PC-9 (cell line): ENCODE measurements at regions of chr11 and their contacts with region 1.

Region 1: DNA sequence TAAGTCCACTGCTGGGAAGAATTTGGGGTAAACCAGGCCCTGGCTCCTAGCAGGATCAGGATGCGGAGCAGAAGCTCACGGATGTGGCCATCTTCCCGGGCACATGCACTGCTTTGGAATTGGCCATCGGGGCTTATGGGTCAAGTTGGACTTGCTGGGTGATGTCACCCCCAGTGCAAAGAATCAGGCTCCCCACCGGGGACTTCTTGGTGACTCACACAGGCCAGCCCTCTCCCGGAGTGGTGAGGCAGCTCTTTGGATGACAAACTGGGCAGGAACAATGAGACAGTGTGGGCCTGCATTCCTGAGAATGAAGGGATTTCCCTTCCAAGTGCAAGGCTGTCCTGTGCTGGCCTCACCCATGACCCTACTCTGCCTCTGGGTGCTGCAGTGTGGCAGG is 128.8 kb upstream of the ANO1 start:
- DNase-seq: peak; percentile 96 to 99
- H3K4me3 ChIP-seq: peak overlapping the region; percentile 5; the same call in 1 of the 2 replicates
- H3K27ac ChIP-seq: peak overlapping the region; percentile 96
- H3K4me1 ChIP-seq: peaks cover 45% of the 10 kb centered on the region
- H3K27me3 ChIP-seq: no peaks in the 10 kb centered on the region
- CTCF ChIP-seq: no peak

Region 2: DNA sequence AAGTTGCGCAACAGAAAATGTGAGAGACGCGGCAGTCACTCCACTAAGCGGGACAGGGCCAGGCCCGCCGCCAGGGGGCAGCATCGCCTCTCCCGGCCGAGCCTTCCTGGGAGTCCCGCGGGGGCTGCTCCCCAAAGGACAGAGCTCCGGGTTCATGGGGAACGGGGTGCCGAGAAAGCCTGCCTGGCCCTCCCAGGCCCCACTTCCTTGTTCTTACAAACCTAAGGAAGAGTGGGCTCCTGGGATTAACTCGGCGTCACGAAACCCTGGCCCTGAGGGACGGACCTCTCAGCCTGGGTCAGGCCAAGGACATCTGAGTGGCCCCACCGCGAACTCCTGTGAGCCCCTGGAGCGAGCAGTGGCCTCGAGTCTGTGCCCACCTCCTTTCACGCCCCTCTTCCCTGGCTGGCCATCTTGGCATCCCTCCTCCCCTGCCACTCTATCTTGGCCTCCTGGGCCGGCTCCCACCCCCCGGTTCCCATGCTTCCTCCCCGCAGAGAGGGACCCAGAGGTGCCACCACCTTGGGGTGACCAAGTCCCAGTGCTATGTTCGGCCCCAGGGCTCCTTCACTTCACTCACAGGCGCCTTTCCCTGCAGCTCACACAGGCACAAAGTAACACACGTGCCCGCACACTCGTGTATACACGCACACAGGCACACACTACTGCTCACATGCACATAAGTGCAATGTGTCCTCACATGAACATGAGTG is 30.2 kb before region 1 on chr11:
- CTCF ChIA-PET with region 1: interaction called, 3 read pairs
- POLR2A ChIA-PET with region 1: interaction called, 11 read pairs
- intact Hi-C with region 1: loop called (anchors 1 kb)
- DNase-seq: peak; percentile 56 to 80
- H3K4me3 ChIP-seq: peak overlapping the region; percentile 16; the same call in 1 of the 2 replicates
- H3K27ac ChIP-seq: no peak overlapping the region
- H3K4me1 ChIP-seq: peaks cover 56% of the 10 kb centered on the region
- H3K27me3 ChIP-seq: no peaks in the 10 kb centered on the region
- CTCF ChIP-seq: peak; percentile 98

Region 3: GRCh38 chr11:70082829-70083228 is 133.5 kb after region 1 on chr11:
- CTCF ChIA-PET with region 1: no interaction called
- POLR2A ChIA-PET with region 1: no interaction called
- intact Hi-C with region 1: loop called (anchors 1 kb)
- DNase-seq: no peak
- H3K4me3 ChIP-seq: no peak overlapping the region
- H3K27ac ChIP-seq: peak overlapping the region; percentile 31
- H3K4me1 ChIP-seq: peaks cover 56% of the 10 kb centered on the region
- H3K27me3 ChIP-seq: no peaks in the 10 kb centered on the region
- CTCF ChIP-seq: peak; percentile 44

Region 4: GRCh38 chr11:70141486-70142220 is 192.3 kb after region 1 on chr11:
- CTCF ChIA-PET with region 1: interaction called, 3 read pairs
- POLR2A ChIA-PET with region 1: no interaction called
- intact Hi-C with region 1: loop called (anchors 5 kb)
- DNase-seq: no peak
- H3K4me3 ChIP-seq: no peak overlapping the region
- H3K27ac ChIP-seq: peak overlapping the region; percentile 52
- H3K4me1 ChIP-seq: peaks cover 33% of the 10 kb centered on the region
- H3K27me3 ChIP-seq: no peaks in the 10 kb centered on the region
- CTCF ChIP-seq: no peak

Region 5: DNA sequence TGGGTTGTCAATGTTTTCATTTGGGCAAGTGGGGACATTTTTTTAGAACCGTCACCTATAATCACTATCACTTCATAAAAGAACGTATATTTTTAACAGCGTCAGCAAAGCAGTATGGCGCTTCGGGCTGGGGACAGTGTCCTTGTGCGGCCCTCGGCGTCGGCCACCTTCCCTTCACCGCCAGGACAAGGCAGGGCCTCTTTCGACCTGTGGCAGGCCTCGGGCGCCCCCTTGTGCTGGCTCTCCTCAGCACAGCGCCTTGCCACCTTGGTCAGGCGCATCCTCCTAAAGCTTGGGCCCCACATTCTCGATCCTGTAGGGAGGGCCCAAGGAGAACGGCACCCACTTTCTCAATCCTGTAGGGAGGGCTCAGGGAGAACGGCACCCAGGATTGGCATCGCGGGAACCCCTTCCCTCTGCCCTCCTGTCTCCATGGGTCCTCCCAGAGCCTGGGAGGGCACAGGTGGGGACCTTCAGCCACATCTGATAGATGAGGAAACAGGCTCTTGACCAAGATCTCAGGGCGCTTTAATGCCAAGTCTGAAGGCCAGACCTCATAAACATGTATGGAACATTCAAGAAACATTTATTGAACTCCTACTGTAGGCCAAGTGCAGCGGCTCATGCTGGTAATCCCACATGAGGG is 242.3 kb after region 1 on chr11:
- CTCF ChIA-PET with region 1: no interaction called
- POLR2A ChIA-PET with region 1: no interaction called
- intact Hi-C with region 1: loop called (anchors 1 kb)
- DNase-seq: peak; percentile 62 to 90
- H3K4me3 ChIP-seq: no peak overlapping the region
- H3K27ac ChIP-seq: no peak overlapping the region
- H3K4me1 ChIP-seq: peaks cover 13% of the 10 kb centered on the region; the same call in 1 of the 2 replicates
- H3K27me3 ChIP-seq: no peaks in the 10 kb centered on the region
- CTCF ChIP-seq: peak; percentile 93

Region 6: DNA sequence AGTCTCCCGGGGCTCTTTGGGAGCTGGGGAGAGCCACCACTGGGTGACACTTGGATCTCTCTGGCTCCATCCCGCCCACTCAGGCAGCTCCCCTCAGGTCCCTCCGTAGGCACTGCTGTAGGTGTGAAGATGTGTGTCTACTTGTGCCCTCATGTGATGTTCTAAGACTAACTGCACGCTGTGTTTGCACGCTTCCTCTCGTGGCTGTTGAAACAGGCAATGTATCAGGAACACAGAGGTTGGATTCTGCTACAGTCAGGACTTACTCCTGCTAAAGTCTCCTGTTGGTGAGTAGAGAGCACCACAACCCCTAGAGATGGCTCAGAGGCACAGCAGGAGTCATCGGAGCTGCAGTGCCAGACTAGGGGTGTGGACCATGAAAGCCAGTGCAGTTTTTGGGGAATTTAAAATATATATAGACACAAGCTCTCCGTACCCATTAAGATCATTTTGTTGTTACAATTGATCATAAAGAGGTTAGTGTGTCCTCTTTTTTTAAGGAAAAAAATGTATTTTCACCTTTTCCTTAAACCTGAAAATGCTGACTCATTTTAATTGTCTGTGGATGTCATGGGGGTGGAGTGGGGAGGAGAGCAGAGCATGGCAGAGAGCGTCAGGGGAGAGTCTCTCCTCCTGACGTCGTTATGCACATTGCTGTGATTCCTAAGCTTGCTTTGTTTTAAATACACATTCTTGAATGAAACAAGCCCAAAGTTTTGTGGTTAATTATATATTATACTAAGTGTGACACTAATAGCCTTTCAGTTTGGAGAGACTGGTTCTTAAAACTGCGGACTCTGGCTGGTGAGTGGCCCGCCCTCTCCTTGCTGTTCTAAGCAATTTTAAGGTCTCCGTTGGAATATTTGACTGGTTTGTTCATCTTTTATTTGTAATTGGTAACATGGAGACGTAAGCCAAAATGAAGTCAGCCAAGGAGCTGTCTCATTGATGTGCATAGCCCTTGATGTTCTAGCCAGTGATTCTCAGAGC is 432.8 kb after region 1 on chr11:
- CTCF ChIA-PET with region 1: no interaction called
- POLR2A ChIA-PET with region 1: no interaction called
- intact Hi-C with region 1: no loop called
- DNase-seq: no peak
- H3K4me3 ChIP-seq: no peak overlapping the region
- H3K27ac ChIP-seq: 0 out of 2 replicates have a peak overlapping the region, but pooled peaks have one; percentile 1
- H3K4me1 ChIP-seq: no peaks in the 10 kb centered on the region
- H3K27me3 ChIP-seq: no peaks in the 10 kb centered on the region
- CTCF ChIP-seq: no peak